ENCODE measurements at regions of chr2 and their contacts with region 1.

Region 1: DNA sequence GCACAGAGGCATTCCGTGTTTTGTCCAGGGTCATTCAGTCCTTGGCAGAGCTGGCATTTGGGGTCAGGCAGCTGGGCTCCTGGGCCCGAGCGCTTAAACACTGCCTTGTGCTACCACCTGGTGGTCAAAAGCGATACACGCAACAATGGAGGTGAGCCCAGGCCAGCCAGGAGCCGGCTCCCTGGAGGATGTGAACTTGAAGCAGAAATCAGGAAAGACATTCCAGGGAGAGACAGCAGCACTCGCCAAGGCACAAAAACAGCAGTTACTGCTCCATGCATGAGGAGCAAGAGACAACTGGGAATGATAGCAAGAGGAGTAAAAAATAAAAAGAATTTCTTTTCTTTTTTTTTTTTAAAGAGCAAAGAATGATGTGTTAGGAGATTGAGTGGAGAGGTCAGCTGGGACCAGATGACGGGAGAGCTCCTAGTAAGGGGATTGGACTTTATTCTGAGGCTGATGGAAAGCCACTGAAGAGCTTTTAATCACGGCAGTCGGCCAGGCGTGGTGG is 20.7 kb downstream of the SCYGR8 start:
- DNase-seq: peak; percentile 68 to 86 (median 82)
- ATAC-seq: peak; percentile 89 to 99 (median 98)
- H3K4me3 ChIP-seq: no peak overlapping the region
- H3K27ac ChIP-seq: peak overlapping the region in 2 of 4 donors; percentile 4 to 51
- H3K4me1 ChIP-seq: no peaks in the 10 kb centered on the region
- H3K27me3 ChIP-seq: no peaks in the 10 kb centered on the region
- CTCF ChIP-seq: peak; percentile 68 to 81 (median 76)

Region 2: DNA sequence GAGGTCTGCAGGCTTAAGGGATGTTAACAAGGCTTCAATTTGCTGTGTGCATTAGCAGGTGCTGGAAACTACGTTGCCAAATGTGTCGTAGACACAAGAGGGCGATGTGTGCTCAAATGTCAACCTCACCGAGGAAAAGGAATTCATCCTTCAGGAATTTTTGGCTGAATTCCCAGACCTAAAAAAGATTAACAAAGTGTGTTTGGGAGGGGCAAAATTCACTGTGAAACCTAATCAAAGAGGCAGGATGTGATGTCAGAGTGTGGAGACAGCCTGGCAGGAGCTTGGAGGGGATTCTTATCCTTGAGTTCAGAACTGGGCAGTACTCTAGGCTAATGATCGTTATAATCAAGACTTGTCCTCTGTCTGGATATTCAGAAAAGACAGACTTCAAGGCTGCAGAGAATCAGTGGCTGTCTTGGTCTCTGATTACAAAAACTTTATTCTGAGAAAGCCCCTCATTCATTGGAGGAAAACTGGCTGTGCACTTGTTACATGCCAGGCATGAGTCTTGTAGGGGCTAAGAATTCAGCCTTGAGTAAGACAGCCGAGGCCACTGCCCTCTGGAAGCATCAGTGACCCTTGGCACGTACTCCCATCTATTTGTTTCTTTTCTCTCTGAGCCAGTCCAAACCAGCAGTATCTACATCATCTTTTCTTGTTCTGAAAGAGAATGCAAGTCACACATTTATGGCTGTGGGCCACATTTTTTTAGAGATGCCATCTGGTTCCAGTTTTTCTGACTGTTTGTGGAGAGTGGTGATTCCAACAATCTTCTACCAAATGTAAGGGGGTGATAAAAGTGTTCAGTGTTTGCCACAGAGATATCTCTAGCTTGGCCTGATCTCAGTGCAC is 360.0 kb before region 1 on chr2:
- intact Hi-C with region 1: loop called in 1 of 3 experiments (anchors 10 kb)
- DNase-seq: peak in 4 of 6 donors; percentile 55 to 88 (median 66)
- ATAC-seq: peak; percentile 87 to 95 (median 91)
- H3K4me3 ChIP-seq: no peak overlapping the region
- H3K27ac ChIP-seq: peak overlapping the region in 3 of 4 donors; percentile 14 to 65 (median 28)
- H3K4me1 ChIP-seq: peaks cover 0 to 6% (median 6%) of the 10 kb centered on the region in 3 donors
- H3K27me3 ChIP-seq: no peaks in the 10 kb centered on the region
- CTCF ChIP-seq: peak; percentile 6 to 53 (median 44)

Region 3: DNA sequence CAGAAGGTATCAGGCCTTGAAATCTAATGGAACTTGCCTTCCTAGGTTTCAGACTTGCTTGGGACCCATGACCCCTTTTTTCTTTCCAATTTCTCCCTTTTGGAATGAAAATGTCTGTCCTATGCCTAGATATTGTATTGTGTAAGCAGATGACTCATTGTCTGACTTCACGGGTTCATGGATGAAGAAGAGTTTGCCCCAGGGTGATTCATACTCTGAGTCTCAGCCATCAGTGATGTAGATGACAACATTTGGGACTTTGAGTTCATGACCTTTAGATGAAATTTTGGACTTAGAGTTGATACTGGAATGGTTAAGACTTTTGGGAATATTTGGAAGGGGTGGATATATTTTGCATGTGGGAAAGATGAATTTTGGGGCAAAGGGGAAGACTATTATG is 111.0 kb before region 1 on chr2:
- intact Hi-C with region 1: loop called in 2 of 3 experiments (anchors 5 kb)
- DNase-seq: no peak
- ATAC-seq: peak in 3 of 4 donors; percentile 27 to 68 (median 43)
- H3K4me3 ChIP-seq: no peak overlapping the region
- H3K27ac ChIP-seq: no peak overlapping the region
- H3K4me1 ChIP-seq: no peaks in the 10 kb centered on the region
- H3K27me3 ChIP-seq: no peaks in the 10 kb centered on the region
- CTCF ChIP-seq: no peak

Region 4: GRCh38 chr2:227661019-227661649 is 105.3 kb before region 1 on chr2:
- intact Hi-C with region 1: loop called in 2 of 3 experiments (anchors 5 kb)
- DNase-seq: no peak
- ATAC-seq: no peak
- H3K4me3 ChIP-seq: no peak overlapping the region
- H3K27ac ChIP-seq: no peak overlapping the region
- H3K4me1 ChIP-seq: no peaks in the 10 kb centered on the region
- H3K27me3 ChIP-seq: no peaks in the 10 kb centered on the region
- CTCF ChIP-seq: no peak